ENCODE measurements at regions of chr14 and their contacts with region 1.

Region 1: GRCh38 chr14:74875941-74876913 is at the start of gene PROX2:
- DNase-seq: no peak
- H3K4me3 Mint-ChIP-seq: no peak within 1 kb of the TSS
- H3K27ac Mint-ChIP-seq: no peak within 1 kb of the TSS
- H3K4me1 Mint-ChIP-seq: peaks cover 11% of the 10 kb centered on the region
- H3K27me3 Mint-ChIP-seq: no peaks in the 10 kb centered on the region
- CTCF ChIP-seq: no peak
- total RNA-seq, gene PROX2: not detected in 2 replicates

Region 2: GRCh38 chr14:74888164-74889158 is 12.2 kb after region 1 on chr14:
- CTCF ChIA-PET with region 1: interaction called, 13 read pairs
- POLR2A ChIA-PET with region 1: interaction called, 9 read pairs
- intact Hi-C with region 1: no loop called
- DNase-seq: peak; percentile 57
- H3K4me3 Mint-ChIP-seq: peak overlapping the region; percentile 24
- H3K27ac Mint-ChIP-seq: peak overlapping the region; percentile 71
- H3K4me1 Mint-ChIP-seq: peaks cover 44% of the 10 kb centered on the region
- H3K27me3 Mint-ChIP-seq: no peaks in the 10 kb centered on the region
- CTCF ChIP-seq: no peak

Region 3: DNA sequence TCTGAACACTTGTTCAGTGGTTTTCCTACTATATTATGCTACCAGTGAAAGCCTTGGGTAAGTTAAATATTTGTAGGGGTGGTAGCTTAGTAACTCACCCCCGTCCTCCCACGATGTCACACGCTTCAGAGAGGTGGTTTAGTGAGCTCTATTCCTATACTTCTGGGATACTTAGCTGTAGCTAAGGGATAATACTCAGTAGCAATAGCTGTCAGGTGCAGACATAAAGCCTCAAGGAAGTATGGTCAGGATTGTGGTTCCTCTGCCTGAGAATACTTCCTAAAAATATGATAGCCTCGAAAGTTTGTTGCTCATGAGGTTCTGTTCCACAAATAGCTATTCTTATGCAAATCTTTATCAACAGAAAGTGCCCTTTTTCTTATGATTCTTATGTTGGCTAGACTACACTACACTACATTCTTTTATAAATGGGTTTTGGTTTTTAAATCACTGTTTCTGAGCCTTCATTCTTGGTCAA is 17.4 kb after region 1 on chr14:
- CTCF ChIA-PET with region 1: interaction called, 13 read pairs
- POLR2A ChIA-PET with region 1: interaction called, 4 read pairs
- intact Hi-C with region 1: no loop called
- DNase-seq: no peak
- H3K4me3 Mint-ChIP-seq: no peak overlapping the region
- H3K27ac Mint-ChIP-seq: no peak overlapping the region
- H3K4me1 Mint-ChIP-seq: peaks cover 5% of the 10 kb centered on the region
- H3K27me3 Mint-ChIP-seq: no peaks in the 10 kb centered on the region
- CTCF ChIP-seq: no peak

Region 4: GRCh38 chr14:74932401-74932901 is 56.2 kb after region 1 on chr14:
- CTCF ChIA-PET with region 1: no interaction called
- POLR2A ChIA-PET with region 1: no interaction called
- intact Hi-C with region 1: no loop called
- DNase-seq: no peak
- H3K4me3 Mint-ChIP-seq: no peak overlapping the region
- H3K27ac Mint-ChIP-seq: no peak overlapping the region
- H3K4me1 Mint-ChIP-seq: no peaks in the 10 kb centered on the region
- H3K27me3 Mint-ChIP-seq: peaks cover 2% of the 10 kb centered on the region
- CTCF ChIP-seq: no peak

Measured in MCF 10A (cell line).